A673 (cell line): ENCODE measurements at regions of chr19 and their contacts with region 1.

Region 1: DNA sequence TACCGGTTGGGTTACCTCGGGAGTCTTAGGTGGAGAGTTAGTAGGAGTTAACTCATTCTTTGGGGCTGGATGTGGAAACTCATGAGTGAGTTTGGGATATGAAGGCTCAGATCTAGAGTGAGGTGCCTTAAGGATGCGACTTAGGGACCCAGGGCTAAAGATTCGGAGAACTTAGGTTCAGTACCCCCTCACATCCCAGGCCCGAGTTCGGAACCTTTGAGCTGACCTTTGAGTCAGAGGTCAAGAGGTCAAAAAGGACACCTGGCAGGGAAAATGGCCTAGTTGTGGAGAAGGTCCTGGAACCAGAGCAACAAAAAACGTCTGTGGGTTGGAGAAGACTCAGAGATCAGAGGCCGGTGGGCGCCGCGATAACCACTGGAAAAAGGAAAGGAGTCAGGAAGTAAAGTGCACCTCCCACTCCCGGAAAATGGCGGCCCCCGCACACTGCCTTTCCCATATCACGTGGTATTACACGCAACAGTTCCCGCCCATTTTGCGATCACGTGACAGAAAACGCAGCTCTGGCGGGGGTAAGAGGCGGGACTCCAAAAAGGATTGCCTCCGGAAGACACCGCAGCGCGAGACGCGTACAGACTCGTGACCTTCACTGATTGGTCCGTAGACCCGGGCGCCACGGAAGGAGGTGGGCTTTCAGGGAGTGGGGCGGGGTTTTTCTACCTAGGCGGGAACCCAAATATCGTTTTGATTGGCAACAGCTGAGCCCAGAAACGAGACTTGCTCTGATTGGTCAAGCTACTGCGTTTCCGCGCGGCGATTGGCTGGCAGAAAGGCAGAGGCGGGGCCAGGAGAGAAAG is at the start of gene ACTMAP:
- DNase-seq: peak; percentile 100
- H3K4me3 ChIP-seq: peak within 1 kb of the TSS; percentile 90
- H3K27ac ChIP-seq: peak within 1 kb of the TSS; percentile 97
- H3K4me1 ChIP-seq: peaks cover 8% of the 10 kb centered on the region
- H3K27me3 ChIP-seq: no peaks in the 10 kb centered on the region
- CTCF ChIP-seq: no peak
- total RNA-seq, gene ACTMAP: 17.1 and 20.8 TPM in 2 replicates

Region 2: GRCh38 chr19:40798223-40798996 is 48.1 kb after region 1 on chr19:
- CTCF ChIA-PET with region 1: no interaction called
- POLR2A ChIA-PET with region 1: no interaction called
- intact Hi-C with region 1: loop called (anchors 2 kb)
- DNase-seq: peak; percentile 100
- H3K4me3 ChIP-seq: peak overlapping the region; percentile 50
- H3K27ac ChIP-seq: peak overlapping the region; percentile 62
- H3K4me1 ChIP-seq: peaks cover 37% of the 10 kb centered on the region
- H3K27me3 ChIP-seq: no peaks in the 10 kb centered on the region
- CTCF ChIP-seq: peak; percentile 57